ENCODE measurements at regions of chr2 and their contacts with region 1.

Region 1: DNA sequence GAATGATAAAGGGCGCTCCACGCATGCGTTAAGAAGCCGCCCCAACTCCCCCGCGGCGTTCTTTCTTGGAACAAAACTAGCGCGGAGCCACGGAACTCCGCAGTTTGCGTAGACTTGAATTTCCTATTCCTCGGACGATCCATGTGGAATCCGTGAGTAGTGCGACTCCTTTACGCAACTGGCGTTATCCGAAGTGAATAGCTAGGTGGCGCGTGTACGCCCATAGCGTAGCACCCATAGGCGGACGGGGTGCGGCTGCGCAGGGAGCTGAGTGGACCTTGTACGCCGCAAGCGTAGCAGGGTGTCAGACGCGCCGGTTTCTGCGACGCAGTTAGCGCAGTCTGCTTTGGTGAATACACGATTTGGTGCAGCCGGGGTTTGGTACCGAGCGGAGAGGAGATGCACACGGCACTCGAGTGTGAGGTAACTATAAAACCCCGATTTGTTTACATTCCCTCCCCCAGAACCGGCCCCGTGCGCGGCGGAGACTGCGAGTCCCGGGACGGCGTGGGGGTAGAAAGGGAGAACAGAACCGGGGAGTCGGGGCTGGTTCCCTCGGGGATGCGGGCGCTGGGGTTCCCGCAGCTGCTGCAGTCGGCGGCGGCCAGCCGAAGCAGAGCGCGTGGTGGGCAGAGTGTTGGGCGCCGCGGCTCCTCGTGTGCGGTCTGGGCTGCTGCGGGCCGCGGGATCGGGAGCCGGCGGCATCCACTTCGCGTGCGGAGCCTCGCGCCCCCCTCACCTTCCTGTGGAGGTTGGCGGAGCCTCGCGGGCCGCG is at the start of gene SLC39A10:
- DNase-seq: peak; percentile 98
- ATAC-seq: peak; percentile 86
- H3K4me3 Mint-ChIP-seq: peak within 1 kb of the TSS; percentile 86
- H3K27ac Mint-ChIP-seq: peak within 1 kb of the TSS; percentile 99
- H3K4me1 Mint-ChIP-seq: peaks cover 26% of the 10 kb centered on the region
- H3K27me3 Mint-ChIP-seq: no peaks in the 10 kb centered on the region
- total RNA-seq, gene SLC39A10: 24.0 to 27.8 TPM

Region 2: GRCh38 chr2:195270466-195271039 is 386.5 kb before region 1 on chr2:
- CTCF ChIA-PET with region 1: no interaction called
- POLR2A ChIA-PET with region 1: no interaction called
- intact Hi-C with region 1: no loop called
- DNase-seq: no peak
- ATAC-seq: no peak
- H3K4me3 Mint-ChIP-seq: no peak overlapping the region
- H3K27ac Mint-ChIP-seq: no peak overlapping the region
- H3K4me1 Mint-ChIP-seq: no peaks in the 10 kb centered on the region
- H3K27me3 Mint-ChIP-seq: peaks cover 2% of the 10 kb centered on the region

Region 3: DNA sequence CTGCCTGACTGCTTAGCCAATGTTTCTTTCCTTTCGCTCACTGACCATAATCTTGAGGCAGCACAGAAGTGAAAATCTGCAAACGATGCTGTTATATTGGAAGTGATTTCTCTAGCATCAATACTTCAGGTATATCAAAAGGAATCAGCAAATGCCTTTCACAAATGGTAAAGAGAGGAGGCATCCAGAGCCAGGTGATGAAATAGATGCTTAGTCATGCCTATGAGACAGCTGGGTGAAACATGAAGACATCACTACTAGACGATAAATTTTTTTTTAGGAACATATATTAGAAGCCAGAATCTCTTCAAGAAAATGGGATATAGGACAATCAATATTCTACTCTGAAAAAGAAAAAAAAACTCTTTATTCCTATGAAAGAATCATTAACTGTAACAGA is 249.3 kb before region 1 on chr2:
- CTCF ChIA-PET with region 1: interaction called, 5 read pairs
- POLR2A ChIA-PET with region 1: interaction called, 4 read pairs
- intact Hi-C with region 1: loop called (anchors 5 kb)
- DNase-seq: no peak
- ATAC-seq: no peak
- H3K4me3 Mint-ChIP-seq: no peak overlapping the region
- H3K27ac Mint-ChIP-seq: no peak overlapping the region
- H3K4me1 Mint-ChIP-seq: peaks cover 8% of the 10 kb centered on the region
- H3K27me3 Mint-ChIP-seq: no peaks in the 10 kb centered on the region

Region 4: DNA sequence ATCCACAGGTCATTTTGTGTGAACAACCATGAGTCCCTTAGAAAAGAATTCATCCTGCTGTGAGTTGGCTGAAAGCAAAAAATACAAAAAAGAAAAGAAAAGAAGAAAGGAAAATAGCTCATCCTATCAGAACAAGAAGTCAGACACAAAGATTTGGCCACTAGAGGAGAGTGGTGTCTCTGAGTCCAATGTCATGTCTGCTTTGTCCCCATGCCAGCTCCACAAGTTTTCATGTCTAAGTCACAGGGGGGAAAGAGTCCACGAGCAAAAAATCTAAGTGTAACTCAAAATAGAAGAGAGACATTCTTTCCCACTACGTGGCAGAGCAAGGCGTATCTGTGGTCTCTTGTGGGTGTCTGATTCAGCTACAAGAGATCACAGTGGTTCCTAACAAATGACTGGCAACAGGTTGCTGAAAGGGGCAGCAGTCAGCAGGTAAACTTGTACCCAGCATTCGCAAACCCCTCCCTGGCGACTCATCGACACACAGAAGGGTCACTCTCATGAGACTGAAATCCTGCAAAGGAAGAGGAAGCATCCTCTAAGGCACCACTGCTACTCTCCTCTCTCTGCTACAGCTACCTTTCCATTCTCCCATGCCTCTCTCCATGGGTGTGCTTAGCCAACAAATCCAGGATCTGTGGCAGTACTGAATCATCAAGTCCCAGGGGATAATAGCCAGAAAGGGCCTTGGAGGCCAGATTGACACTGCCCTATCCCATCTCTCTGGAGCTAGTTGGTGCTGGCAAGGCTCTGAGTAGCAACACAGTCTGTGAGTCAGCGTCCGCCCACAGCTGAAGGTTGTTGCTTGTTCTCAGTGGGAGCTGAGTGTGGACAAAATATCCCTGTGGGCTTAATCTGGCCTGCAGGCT is 123.0 kb before region 1 on chr2:
- CTCF ChIA-PET with region 1: interaction called, 26 read pairs
- POLR2A ChIA-PET with region 1: interaction called, 30 read pairs
- intact Hi-C with region 1: loop called (anchors 1 kb)
- DNase-seq: peak; percentile 86
- ATAC-seq: peak; percentile 75
- H3K4me3 Mint-ChIP-seq: peak overlapping the region; percentile 78
- H3K27ac Mint-ChIP-seq: peak overlapping the region; percentile 100
- H3K4me1 Mint-ChIP-seq: peaks cover 82% of the 10 kb centered on the region
- H3K27me3 Mint-ChIP-seq: no peaks in the 10 kb centered on the region

Region 5: DNA sequence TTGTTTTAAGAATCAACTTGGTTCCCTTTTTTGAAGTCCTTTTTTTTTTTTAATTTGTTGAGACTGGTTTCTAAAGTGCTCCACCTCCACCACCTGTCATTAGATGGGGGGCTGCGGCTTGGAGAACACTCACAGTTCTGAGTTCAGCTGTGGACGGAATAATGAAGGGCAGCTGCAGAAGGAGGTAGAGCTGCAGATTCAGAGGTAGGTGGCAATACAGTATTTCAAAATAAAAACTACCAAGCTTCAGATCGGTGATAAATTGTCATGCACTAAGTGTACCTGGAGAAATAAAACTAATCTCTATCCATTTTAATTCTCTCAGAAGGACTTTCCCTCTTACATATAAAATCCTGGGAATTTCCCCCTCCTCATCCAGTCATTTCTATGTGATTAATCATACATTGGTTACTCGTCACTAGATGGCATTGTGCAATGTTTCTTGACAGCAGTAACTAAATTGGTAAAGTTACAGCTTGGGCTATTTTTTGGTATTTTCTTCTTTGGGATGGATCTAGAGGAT is 81.1 kb before region 1 on chr2:
- CTCF ChIA-PET with region 1: interaction called, 16 read pairs
- POLR2A ChIA-PET with region 1: interaction called, 9 read pairs
- intact Hi-C with region 1: loop called (anchors 1 to 5 kb)
- DNase-seq: no peak
- ATAC-seq: peak; percentile 75
- H3K4me3 Mint-ChIP-seq: peak overlapping the region; percentile 33
- H3K27ac Mint-ChIP-seq: peak overlapping the region; percentile 67
- H3K4me1 Mint-ChIP-seq: peaks cover 71% of the 10 kb centered on the region
- H3K27me3 Mint-ChIP-seq: no peaks in the 10 kb centered on the region

Region 6: DNA sequence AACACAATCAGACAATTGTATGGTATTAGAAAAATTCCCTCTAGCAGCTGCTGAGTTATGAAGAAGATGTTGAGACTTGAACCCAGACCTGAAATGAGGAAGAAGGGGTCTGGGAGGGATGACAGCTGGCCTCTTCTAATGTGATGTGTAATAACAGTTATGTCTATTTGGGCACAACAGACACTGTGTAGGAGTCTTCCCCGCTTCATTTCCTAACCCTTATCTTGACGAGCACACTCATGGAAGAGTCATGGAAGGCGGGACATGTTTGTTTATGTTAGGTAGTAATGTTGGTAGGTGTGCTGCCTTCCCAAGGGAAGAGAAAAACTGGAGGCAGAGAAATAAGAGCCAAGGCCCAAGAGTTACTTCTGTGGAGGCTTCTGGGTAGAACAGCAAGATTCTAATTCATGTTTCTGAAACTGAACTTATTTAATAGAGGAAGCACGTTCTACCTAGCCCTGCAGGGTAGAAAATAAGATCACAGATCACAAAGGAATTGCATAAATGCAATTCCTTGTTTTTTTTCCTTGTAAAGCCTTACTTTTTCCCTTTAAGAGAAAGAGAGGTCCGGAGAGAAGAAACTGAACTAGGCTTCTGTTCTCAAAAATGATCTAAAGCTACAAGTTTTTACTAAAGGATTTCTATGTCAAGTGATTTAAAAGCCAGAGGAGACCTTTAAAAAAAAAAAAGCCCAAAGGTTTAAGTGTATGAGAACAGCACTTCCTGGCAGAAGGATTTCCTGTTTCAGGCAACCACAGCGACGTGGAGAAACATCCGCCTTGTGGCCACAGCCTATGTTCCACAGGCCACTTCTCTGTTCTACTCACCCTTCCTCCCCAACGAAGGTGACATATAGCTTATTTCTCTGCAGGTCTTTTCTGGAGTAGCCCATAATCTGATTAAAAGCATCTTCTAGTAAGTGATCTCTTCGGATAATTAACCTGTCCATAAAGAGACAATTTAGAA is 582.9 kb after region 1 on chr2:
- CTCF ChIA-PET with region 1: no interaction called
- POLR2A ChIA-PET with region 1: interaction called, 10 read pairs
- intact Hi-C with region 1: no loop called
- DNase-seq: peak; percentile 91
- ATAC-seq: peak; percentile 58
- H3K4me3 Mint-ChIP-seq: peak overlapping the region; percentile 46
- H3K27ac Mint-ChIP-seq: peak overlapping the region; percentile 97
- H3K4me1 Mint-ChIP-seq: peaks cover 91% of the 10 kb centered on the region
- H3K27me3 Mint-ChIP-seq: no peaks in the 10 kb centered on the region

Region 7: DNA sequence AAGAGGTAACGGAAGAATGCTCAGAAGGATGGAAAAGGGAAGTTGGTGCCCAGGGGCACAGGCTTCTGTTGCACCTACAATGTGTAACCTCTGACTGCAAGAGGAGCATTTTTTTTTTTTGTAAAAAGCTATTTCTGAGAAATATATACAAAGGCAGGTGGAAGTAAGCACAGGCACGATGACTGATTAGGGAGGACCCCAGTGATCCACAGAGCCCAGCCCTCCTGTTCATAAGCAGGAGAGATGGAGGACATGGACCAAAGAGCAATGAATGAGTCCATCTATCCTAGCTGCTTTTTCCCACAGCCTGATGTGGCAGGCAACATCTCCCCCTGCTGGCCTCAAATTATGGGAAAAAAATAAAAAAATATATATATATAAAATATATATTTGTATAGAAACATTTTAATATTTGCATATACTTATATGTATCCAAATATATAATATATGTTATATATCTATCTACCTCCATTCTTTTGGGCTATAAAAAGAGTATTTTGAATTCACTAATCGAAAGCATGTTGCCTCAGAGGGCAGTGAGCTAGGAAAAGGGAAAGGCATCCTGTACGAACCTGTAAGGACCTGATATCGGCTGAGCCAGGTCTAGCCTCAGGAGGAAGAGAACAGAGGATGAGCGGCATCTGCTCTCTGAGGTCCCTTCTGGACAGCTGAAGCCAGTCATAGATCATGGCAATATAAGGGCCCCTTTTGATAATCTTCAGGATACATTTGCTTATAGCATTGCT is 680.3 kb after region 1 on chr2:
- CTCF ChIA-PET with region 1: no interaction called
- POLR2A ChIA-PET with region 1: no interaction called
- intact Hi-C with region 1: loop called in 1 of 2 experiments (anchors 10 kb)
- DNase-seq: peak; percentile 35
- ATAC-seq: peak; percentile 49
- H3K4me3 Mint-ChIP-seq: no peak overlapping the region
- H3K27ac Mint-ChIP-seq: no peak overlapping the region
- H3K4me1 Mint-ChIP-seq: peaks cover 9% of the 10 kb centered on the region
- H3K27me3 Mint-ChIP-seq: no peaks in the 10 kb centered on the region

Measured in activated CD4-positive, alpha-beta T cell treated with anti-CD3 and anti-CD28 coated beads for 36 hours (primary cell).